ENCODE measurements at regions of chr1 and their contacts with region 1.

Region 1: GRCh38 chr1:40153073-40153770 is 8.0 kb upstream of the RLF start:
- DNase-seq: no peak
- H3K4me3 ChIP-seq: no peak overlapping the region
- H3K27ac ChIP-seq: no peak overlapping the region
- H3K4me1 ChIP-seq: no peaks in the 10 kb centered on the region
- H3K27me3 ChIP-seq: peaks cover 5% of the 10 kb centered on the region
- CTCF ChIP-seq: peak; percentile 57 to 67 (median 63)
- EP300 ChIP-seq: no peak
- POLR2A ChIP-seq: no peak

Region 2: GRCh38 chr1:40315239-40315794 is 162.1 kb after region 1 on chr1:
- in situ Hi-C with region 1: no loop called
- intact Hi-C with region 1: loop called (anchors 10 kb)
- DNase-seq: peak; percentile 87
- H3K4me3 ChIP-seq: peak overlapping the region; percentile 11 to 54 (median 34)
- H3K27ac ChIP-seq: peak overlapping the region in 1 of 4 donors; percentile 5
- H3K4me1 ChIP-seq: peaks cover 9 to 37% (median 27%) of the 10 kb centered on the region in 4 donors
- H3K27me3 ChIP-seq: peaks cover 53% of the 10 kb centered on the region
- CTCF ChIP-seq: peak; percentile 93 to 97 (median 95)
- EP300 ChIP-seq: no peak
- POLR2A ChIP-seq: no peak

Region 3: GRCh38 chr1:40338745-40339424 is 185.7 kb after region 1 on chr1:
- in situ Hi-C with region 1: loop called (anchors 5 to 10 kb)
- intact Hi-C with region 1: loop called (anchors 5 kb)
- DNase-seq: peak; percentile 89
- H3K4me3 ChIP-seq: peak overlapping the region in 1 of 4 donors; percentile 30
- H3K27ac ChIP-seq: no peak overlapping the region
- H3K4me1 ChIP-seq: peaks cover 0 to 8% (median 3%) of the 10 kb centered on the region in 4 donors
- H3K27me3 ChIP-seq: no peaks in the 10 kb centered on the region
- CTCF ChIP-seq: peak; percentile 96 to 99 (median 98)
- EP300 ChIP-seq: no peak
- POLR2A ChIP-seq: no peak

Measured in transverse colon (tissue), 4 donors.